CD14-positive monocyte (primary cell): ENCODE measurements at regions of chr14 and their contacts with region 1.

Region 1: DNA sequence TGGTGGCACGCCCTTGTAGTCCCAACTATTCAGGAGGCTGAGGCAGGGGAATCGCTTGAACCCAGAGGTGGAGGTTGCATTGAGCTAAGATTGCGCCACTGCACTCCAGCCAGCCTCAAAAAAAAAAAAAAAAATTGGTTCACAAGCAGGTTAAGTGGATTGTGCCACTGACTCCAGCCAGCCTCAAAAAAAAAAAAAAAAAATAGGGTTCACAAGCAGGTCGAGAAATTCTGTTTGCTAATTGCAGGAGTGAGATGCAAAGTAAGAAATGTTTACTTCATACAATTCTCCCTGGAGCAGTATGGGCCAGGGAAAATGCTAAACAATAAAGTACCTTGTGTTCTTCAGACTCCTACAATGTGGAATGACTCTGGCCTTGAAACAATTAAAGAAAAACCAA is 6.1 kb downstream of the EDDM3B start:
- DNase-seq: no peak
- H3K4me3 ChIP-seq: no peak overlapping the region
- H3K4me3 Mint-ChIP-seq: no peak overlapping the region
- H3K27ac ChIP-seq: no peak overlapping the region
- H3K27ac Mint-ChIP-seq: peak overlapping the region in 1 of 7 donors; percentile 50
- H3K4me1 ChIP-seq: peaks cover 9 to 19% of the 10 kb centered on the region in 2 donors
- H3K4me1 Mint-ChIP-seq: peaks cover 23% of the 10 kb centered on the region
- H3K27me3 ChIP-seq: no peaks in the 10 kb centered on the region
- H3K27me3 Mint-ChIP-seq: no peaks in the 10 kb centered on the region
- CTCF ChIP-seq: no peak

Region 2: DNA sequence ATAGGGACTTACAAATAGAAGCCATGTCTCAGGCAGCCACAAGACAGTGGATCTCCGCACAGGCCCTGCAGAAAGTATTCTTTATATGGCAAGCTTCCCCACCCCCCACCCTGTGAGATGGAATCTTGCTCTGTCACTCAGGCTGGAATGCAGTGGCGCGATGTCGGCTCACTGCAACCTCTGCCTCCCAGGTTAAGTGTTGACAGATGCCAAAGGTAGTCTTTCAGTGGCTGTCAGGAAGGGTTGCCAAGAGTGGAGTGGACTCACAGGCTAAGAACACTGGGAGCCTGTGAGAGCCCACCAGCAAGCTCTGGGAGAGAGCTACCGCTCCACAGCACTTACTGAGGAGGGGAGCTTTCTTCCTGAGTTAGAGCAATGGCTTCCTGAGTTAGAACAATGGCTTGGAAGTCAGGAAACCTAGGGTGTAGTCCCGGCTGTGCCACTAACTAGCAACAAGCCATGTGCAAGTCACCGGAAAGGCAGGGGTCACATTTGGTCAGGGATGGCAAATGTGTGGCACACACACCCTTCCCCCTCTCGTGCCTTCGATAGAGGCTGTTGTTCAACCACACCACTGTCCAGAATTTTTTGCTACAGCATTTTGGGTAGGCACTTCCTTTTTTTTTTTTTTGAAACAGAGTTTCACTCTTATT is 25.7 kb after region 1 on chr14:
- intact Hi-C with region 1: no loop called
- DNase-seq: peak; percentile 68 to 79 (median 72)
- H3K4me3 ChIP-seq: peak overlapping the region in 1 of 3 experiments; percentile 64
- H3K4me3 Mint-ChIP-seq: peak overlapping the region; percentile 52 to 71
- H3K27ac ChIP-seq: peak overlapping the region; percentile 74 to 91
- H3K27ac Mint-ChIP-seq: peak overlapping the region; percentile 75 to 96 (median 93)
- H3K4me1 ChIP-seq: peaks cover 67 to 80% of the 10 kb centered on the region in 2 donors
- H3K4me1 Mint-ChIP-seq: peaks cover 71% of the 10 kb centered on the region
- H3K27me3 ChIP-seq: no peaks in the 10 kb centered on the region
- H3K27me3 Mint-ChIP-seq: peaks cover 0 to 3% (median 2%) of the 10 kb centered on the region in 3 donors
- CTCF ChIP-seq: no peak

Region 3: GRCh38 chr14:20811986-20812975 is 37.9 kb after region 1 on chr14:
- intact Hi-C with region 1: loop called in 1 of 2 experiments (anchors 5 kb)
- DNase-seq: no peak
- H3K4me3 ChIP-seq: peak overlapping the region in 1 of 3 experiments; percentile 32
- H3K4me3 Mint-ChIP-seq: no peak overlapping the region
- H3K27ac ChIP-seq: no peak overlapping the region
- H3K27ac Mint-ChIP-seq: peak overlapping the region in 2 of 7 donors; percentile 18 to 46
- H3K4me1 ChIP-seq: peaks cover 32 to 49% of the 10 kb centered on the region in 2 donors
- H3K4me1 Mint-ChIP-seq: peaks cover 50% of the 10 kb centered on the region
- H3K27me3 ChIP-seq: no peaks in the 10 kb centered on the region
- H3K27me3 Mint-ChIP-seq: peaks cover 0 to 4% (median 0%) of the 10 kb centered on the region in 3 donors
- CTCF ChIP-seq: no peak